ENCODE measurements at regions of chr4 and their contacts with region 1.

Region 1: GRCh38 chr4:159232465-159233106 is 129.7 kb downstream of the RAPGEF2 start:
- DNase-seq: no peak
- H3K4me3 ChIP-seq: no peak overlapping the region
- H3K27ac ChIP-seq: no peak overlapping the region
- H3K4me1 ChIP-seq: no peaks in the 10 kb centered on the region
- H3K27me3 ChIP-seq: no peaks in the 10 kb centered on the region
- CTCF ChIP-seq: no peak

Region 2: DNA sequence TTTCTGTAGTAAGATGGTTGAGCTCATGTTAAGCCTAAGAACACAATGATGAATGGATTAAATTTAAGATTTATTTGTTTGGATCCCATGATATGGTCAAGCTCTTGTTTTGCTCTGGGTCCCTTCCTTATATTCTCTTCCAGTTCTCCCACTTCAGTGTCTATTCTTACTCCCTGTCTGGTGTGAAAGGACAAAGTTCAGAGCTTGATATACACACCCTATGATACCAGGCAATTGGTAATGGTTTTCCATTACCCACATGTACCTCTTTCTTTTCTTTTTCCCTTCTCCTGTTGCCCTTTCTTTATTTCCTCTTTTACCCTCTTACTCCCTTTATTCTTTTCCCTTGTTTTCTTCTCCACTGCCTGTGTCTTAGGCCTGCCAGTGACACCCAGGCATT is 93.9 kb after region 1 on chr4:
- intact Hi-C with region 1: loop called (anchors 10 kb)
- DNase-seq: no peak
- H3K4me3 ChIP-seq: no peak overlapping the region
- H3K27ac ChIP-seq: no peak overlapping the region
- H3K4me1 ChIP-seq: no peaks in the 10 kb centered on the region
- H3K27me3 ChIP-seq: no peaks in the 10 kb centered on the region
- CTCF ChIP-seq: no peak

Region 3: DNA sequence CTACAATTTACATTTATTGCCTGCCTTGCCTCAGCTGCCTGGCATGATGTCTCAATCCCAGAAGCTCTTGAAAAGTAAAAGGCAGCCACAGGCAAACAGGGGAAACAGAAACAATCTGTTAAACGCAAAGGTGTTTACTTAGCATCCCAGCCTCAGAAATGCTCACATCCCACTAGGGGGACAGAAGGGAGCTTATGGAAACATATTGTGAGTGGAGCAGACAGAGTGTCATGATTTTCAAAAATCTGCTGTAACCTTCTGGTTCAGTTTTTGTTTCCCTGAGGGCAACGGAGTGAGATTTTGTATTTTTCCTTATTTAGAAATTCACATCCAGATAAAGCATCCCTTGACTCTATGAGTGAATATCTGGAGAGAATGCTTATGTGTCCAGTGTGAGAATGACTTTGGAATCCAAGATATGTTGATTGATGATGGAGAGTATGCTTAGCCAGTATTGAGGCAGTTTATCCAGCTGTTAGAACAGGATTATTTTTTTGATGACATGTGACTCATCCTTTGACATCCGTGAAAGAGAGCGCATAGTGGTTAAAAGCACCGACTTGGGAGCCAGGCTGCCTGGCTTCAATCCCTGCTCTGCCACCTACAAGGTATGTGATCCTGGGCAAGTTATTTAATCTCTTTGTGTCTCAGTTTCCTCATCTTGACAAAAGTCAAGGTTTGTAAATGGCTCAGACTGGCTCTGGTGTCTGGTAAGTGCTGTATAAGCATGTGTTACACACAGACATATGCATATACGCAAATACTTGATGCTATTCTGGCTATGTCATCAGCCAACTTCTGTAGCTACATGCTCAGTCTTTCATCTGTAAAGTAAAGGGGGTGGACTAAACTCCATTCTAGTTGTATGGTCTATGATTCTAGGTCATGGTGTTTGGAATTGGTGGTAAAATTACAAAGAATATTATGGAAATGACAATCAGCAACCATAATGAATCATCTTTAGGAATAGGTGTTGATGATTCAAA is 251.5 kb after region 1 on chr4:
- intact Hi-C with region 1: no loop called
- DNase-seq: no peak
- H3K4me3 ChIP-seq: no peak overlapping the region
- H3K27ac ChIP-seq: no peak overlapping the region
- H3K4me1 ChIP-seq: no peaks in the 10 kb centered on the region
- H3K27me3 ChIP-seq: no peaks in the 10 kb centered on the region
- CTCF ChIP-seq: no peak

Measured in colonic mucosa (tissue), 4 donors.